ENCODE measurements at regions of chr2 and their contacts with region 1.

Region 1: DNA sequence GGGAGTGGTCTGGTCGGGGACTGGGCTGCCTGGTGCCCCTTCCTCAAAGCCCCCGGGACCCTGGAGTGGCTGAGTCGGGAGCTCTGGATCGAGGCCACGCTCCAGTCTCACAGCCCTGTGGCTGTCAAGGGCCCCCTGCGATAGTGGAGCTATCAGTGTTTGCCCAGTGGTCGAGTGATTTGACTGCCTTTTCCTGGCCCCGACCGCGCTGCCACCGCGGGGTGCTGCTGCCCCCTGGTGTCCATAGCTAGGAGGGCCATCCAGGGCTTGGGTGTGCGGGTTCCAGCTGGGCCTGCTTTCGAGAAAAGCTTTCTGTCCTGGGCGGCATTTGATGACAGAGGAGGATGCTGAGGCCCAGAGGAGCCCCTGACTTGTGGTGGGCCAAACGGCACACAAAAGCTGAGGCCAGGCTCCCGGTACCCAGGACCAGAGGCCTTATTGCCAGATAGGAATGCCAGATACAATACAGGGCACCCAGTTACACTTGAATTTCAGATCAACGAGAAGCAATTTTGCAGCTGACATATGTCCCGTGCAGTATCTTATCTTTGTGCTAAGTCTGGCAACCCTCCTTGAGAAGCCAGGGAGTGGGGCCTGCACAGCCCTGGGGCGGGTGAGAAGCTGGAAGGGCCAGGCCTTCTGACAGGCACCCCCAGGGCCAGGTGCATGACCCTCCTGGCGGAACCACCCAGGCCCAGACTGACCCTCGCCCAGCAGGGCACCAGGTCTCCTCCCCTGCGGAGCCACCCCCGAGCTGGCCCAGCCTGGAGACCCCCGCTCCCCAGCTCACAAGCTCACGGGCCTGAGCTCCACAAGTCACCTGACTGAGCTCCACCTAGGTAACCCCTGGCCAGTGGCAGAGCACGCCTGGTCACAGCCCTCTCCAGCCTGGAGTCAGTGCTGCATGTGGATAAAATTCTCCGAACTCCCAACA is 13.0 kb downstream of the ODC1 start:
- DNase-seq: peak; percentile 54 to 76 (median 67)
- H3K4me3 ChIP-seq: no peak overlapping the region
- H3K4me3 Mint-ChIP-seq: peak overlapping the region in 4 of 7 donors; percentile 20 to 55 (median 44)
- H3K27ac ChIP-seq: no peak overlapping the region
- H3K27ac Mint-ChIP-seq: peak overlapping the region in 2 of 8 donors; percentile 61 to 70
- H3K4me1 ChIP-seq: peaks cover 7% of the 10 kb centered on the region
- H3K4me1 Mint-ChIP-seq: peaks cover 10 to 22% (median 11%) of the 10 kb centered on the region in 3 donors
- H3K27me3 ChIP-seq: no peaks in the 10 kb centered on the region
- H3K27me3 Mint-ChIP-seq: peaks cover 0 to 15% of the 10 kb centered on the region in 2 donors

Region 2: GRCh38 chr2:10079234-10079869 is 355.8 kb before region 1 on chr2:
- CTCF ChIA-PET with region 1: interaction called, 20 read pairs
- POLR2A ChIA-PET with region 1: interaction called, 4 read pairs
- DNase-seq: peak in 2 of 5 donors; percentile 13 to 18
- H3K4me3 ChIP-seq: no peak overlapping the region
- H3K4me3 Mint-ChIP-seq: peak overlapping the region; percentile 76 to 88 (median 84)
- H3K27ac ChIP-seq: no peak overlapping the region
- H3K27ac Mint-ChIP-seq: peak overlapping the region in 5 of 8 donors; percentile 5 to 80 (median 51)
- H3K4me1 ChIP-seq: peaks cover 18% of the 10 kb centered on the region
- H3K4me1 Mint-ChIP-seq: peaks cover 10 to 23% (median 19%) of the 10 kb centered on the region in 3 donors
- H3K27me3 ChIP-seq: peaks cover 54% of the 10 kb centered on the region
- H3K27me3 Mint-ChIP-seq: peaks cover 52 to 79% of the 10 kb centered on the region in 2 donors

Region 3: GRCh38 chr2:10122386-10123280 is 312.5 kb before region 1 on chr2 and contains the start of gene RRM2:
- CTCF ChIA-PET with region 1: interaction called, 67 read pairs
- POLR2A ChIA-PET with region 1: interaction called, 3 read pairs
- DNase-seq: peak; percentile 81 to 91 (median 82)
- H3K4me3 ChIP-seq: peak within 1 kb of the TSS; percentile 53
- H3K4me3 Mint-ChIP-seq: peak within 1 kb of the TSS; percentile 85 to 98 (median 98)
- H3K27ac ChIP-seq: peak within 1 kb of the TSS; percentile 78
- H3K27ac Mint-ChIP-seq: peak within 1 kb of the TSS in 7 of 8 donors; percentile 51 to 81 (median 68)
- H3K4me1 ChIP-seq: peaks cover 36% of the 10 kb centered on the region
- H3K4me1 Mint-ChIP-seq: peaks cover 41 to 59% (median 57%) of the 10 kb centered on the region in 3 donors
- H3K27me3 ChIP-seq: peaks cover 7% of the 10 kb centered on the region
- H3K27me3 Mint-ChIP-seq: peaks cover 15 to 17% of the 10 kb centered on the region in 2 donors
- total RNA-seq, gene RRM2: 425 to 427 TPM

Region 4: GRCh38 chr2:10132043-10132575 is 303.0 kb before region 1 on chr2:
- CTCF ChIA-PET with region 1: interaction called, 67 read pairs
- POLR2A ChIA-PET with region 1: no interaction called
- DNase-seq: no peak
- H3K4me3 ChIP-seq: no peak overlapping the region
- H3K4me3 Mint-ChIP-seq: no peak overlapping the region
- H3K27ac ChIP-seq: no peak overlapping the region
- H3K27ac Mint-ChIP-seq: no peak overlapping the region
- H3K4me1 ChIP-seq: no peaks in the 10 kb centered on the region
- H3K4me1 Mint-ChIP-seq: peaks cover 5 to 38% (median 14%) of the 10 kb centered on the region in 3 donors
- H3K27me3 ChIP-seq: no peaks in the 10 kb centered on the region
- H3K27me3 Mint-ChIP-seq: no peaks in the 10 kb centered on the region

Region 5: DNA sequence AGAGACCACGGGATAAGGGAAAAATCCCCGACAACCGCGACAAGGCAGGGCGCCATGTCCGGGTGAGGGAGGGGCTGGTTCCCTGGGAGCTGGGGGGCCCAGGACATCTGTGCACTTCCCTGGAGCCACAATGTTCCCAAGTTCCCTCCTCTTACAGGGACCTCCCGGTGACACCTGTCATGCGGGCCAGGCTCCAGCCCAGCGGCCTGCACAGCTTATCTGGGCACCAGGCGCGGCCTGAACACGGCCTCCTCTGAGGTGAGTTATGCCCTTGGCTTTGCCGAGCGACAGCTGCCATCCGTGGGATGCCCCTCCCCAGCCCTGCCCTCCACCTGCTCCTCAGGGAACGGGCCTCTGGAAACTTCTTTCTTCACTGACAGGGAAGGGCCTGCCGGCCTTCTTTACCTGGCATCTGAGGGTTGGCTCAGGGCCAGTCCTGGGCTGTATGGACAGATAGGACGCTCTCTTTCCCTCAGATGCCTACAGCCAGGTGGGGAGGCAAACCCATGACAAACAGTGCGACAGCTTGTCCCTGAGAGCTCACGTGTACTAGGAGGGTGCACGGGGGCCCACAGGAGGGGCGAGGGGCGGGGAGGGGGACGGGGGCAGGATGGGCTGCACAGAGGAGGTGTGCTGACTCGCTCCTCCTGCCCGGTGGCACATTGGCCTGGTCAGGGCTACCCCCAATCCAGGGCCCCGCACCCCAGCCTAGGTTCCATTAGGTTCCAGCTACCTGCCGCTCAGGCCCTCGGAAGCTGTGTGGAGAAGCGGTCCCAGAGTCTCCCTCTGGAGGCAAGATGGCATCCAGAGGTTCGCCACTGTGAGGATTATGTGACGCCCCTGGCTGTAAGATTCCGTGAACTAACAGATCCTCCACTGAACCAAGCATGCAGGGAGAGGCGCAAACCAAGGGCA is 167.3 kb before region 1 on chr2:
- CTCF ChIA-PET with region 1: interaction called, 25 read pairs
- POLR2A ChIA-PET with region 1: no interaction called
- DNase-seq: peak in 1 of 5 donors; percentile 33
- H3K4me3 ChIP-seq: no peak overlapping the region
- H3K4me3 Mint-ChIP-seq: no peak overlapping the region
- H3K27ac ChIP-seq: no peak overlapping the region
- H3K27ac Mint-ChIP-seq: no peak overlapping the region
- H3K4me1 ChIP-seq: no peaks in the 10 kb centered on the region
- H3K4me1 Mint-ChIP-seq: peaks cover 0 to 5% (median 5%) of the 10 kb centered on the region in 3 donors
- H3K27me3 ChIP-seq: no peaks in the 10 kb centered on the region
- H3K27me3 Mint-ChIP-seq: peaks cover 0 to 2% of the 10 kb centered on the region in 2 donors

Region 6: GRCh38 chr2:10302479-10303180 is 132.5 kb before region 1 on chr2 and contains the start of gene HPCAL1:
- CTCF ChIA-PET with region 1: interaction called, 18 read pairs
- POLR2A ChIA-PET with region 1: no interaction called
- DNase-seq: peak; percentile 80 to 86 (median 83)
- H3K4me3 ChIP-seq: peak within 1 kb of the TSS; percentile 76
- H3K4me3 Mint-ChIP-seq: peak within 1 kb of the TSS; percentile 97 to 99 (median 97)
- H3K27ac ChIP-seq: peak within 1 kb of the TSS; percentile 54
- H3K27ac Mint-ChIP-seq: peak within 1 kb of the TSS; percentile 76 to 97 (median 94)
- H3K4me1 ChIP-seq: peaks cover 60% of the 10 kb centered on the region
- H3K4me1 Mint-ChIP-seq: peaks cover 63 to 78% (median 76%) of the 10 kb centered on the region in 3 donors
- H3K27me3 ChIP-seq: no peaks in the 10 kb centered on the region
- H3K27me3 Mint-ChIP-seq: peaks cover 0 to 2% of the 10 kb centered on the region in 2 donors
- total RNA-seq, gene HPCAL1: 44.1 to 47.6 TPM

Region 7: GRCh38 chr2:10448208-10448645 is 13.1 kb after region 1 on chr2 and contains the start of gene ODC1:
- CTCF ChIA-PET with region 1: interaction called, 50 read pairs
- POLR2A ChIA-PET with region 1: interaction called, 13 read pairs
- DNase-seq: peak; percentile 96 to 99 (median 98)
- H3K4me3 ChIP-seq: peak within 1 kb of the TSS; percentile 81
- H3K4me3 Mint-ChIP-seq: peak within 1 kb of the TSS; percentile 78 to 92 (median 85)
- H3K27ac ChIP-seq: peak within 1 kb of the TSS; percentile 95
- H3K27ac Mint-ChIP-seq: peak within 1 kb of the TSS; percentile 78 to 95 (median 89)
- H3K4me1 ChIP-seq: peaks cover 35% of the 10 kb centered on the region
- H3K4me1 Mint-ChIP-seq: peaks cover 29 to 45% (median 45%) of the 10 kb centered on the region in 3 donors
- H3K27me3 ChIP-seq: no peaks in the 10 kb centered on the region
- H3K27me3 Mint-ChIP-seq: no peaks in the 10 kb centered on the region
- total RNA-seq, gene ODC1: 565 to 566 TPM

Region 8: DNA sequence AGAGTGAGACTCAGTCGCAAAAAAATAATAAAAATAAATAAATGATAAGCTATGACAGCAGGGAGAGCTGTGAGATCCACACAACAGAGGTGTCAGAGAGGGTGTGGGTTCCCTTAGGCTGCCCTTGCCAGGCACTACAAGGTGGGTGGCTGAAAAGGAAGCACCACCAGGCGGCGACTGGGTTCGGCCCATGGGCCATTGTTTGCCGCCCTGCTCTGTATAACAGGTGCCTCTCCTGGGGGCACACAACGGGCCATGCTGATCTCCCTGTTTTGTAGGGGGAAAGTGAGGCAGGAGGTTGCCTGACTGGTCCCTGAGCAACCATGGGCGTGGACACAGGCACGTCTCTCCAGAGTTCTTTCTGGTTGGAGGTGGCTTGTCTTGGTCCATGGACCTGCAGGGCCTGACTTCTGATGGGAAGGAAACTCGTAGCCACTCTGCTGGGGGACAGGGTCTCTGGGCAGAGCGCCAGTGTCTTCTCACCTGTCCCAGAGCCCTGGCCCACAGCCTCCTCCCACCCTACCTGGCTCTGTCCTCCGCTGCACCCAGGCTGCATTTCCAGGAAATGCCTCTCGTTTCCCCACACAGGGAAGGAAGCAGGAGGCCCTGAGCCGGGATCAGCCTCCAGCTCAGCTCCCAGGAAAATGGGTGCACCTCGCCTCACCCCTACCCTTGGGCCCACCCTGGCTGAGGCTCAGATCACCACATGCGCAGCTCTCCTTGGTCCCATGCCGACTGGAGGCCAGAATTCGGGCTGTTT is 122.5 kb after region 1 on chr2:
- CTCF ChIA-PET with region 1: no interaction called
- POLR2A ChIA-PET with region 1: no interaction called
- DNase-seq: no peak
- H3K4me3 ChIP-seq: no peak overlapping the region
- H3K4me3 Mint-ChIP-seq: no peak overlapping the region
- H3K27ac ChIP-seq: no peak overlapping the region
- H3K27ac Mint-ChIP-seq: peak overlapping the region in 1 of 8 donors; percentile 70
- H3K4me1 ChIP-seq: no peaks in the 10 kb centered on the region
- H3K4me1 Mint-ChIP-seq: no peaks in the 10 kb centered on the region
- H3K27me3 ChIP-seq: no peaks in the 10 kb centered on the region
- H3K27me3 Mint-ChIP-seq: peaks cover 0 to 2% of the 10 kb centered on the region in 2 donors

Measured in CD8-positive, alpha-beta memory T cell (primary cell).